ENCODE measurements at regions of chr13 and their contacts with region 1.

Region 1: DNA sequence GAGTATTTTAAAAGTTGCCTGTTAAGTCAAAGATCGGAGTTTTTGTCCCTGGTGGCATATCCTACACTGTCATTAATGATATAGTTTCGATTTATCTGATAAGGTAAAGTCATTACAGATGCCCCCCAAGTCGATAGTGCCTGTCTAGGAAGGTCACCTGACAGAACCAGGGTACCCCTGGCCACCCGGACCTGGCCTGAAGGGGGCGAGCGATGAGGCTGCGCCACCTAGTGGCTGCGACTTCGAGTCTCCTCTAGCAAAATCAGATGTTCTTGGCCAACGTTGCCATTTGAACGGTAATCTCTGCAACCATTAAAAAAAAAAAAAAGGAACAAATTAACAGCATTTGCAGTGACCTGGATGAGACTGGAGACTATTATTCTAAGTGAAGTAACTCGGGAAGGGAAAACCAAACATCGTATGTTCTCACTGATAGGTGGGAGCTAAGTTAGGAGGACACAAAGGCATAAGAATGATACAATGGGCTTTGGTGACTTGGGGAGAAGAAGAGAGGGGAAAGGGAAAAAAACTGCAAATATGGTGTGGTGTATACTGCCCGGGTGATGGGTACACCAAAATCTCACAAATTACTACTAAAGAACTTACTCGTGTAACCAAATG is 565.1 kb downstream of the LIG4 start:
- DNase-seq: peak; percentile 26
- CTCF ChIP-seq: peak; percentile 85

Region 2: GRCh38 chr13:107203146-107203847 is 446.9 kb before region 1 on chr13:
- CTCF ChIA-PET with region 1: interaction called, 16 read pairs
- POLR2A ChIA-PET with region 1: no interaction called
- DNase-seq: peak; percentile 21
- CTCF ChIP-seq: peak; percentile 5

Region 3: DNA sequence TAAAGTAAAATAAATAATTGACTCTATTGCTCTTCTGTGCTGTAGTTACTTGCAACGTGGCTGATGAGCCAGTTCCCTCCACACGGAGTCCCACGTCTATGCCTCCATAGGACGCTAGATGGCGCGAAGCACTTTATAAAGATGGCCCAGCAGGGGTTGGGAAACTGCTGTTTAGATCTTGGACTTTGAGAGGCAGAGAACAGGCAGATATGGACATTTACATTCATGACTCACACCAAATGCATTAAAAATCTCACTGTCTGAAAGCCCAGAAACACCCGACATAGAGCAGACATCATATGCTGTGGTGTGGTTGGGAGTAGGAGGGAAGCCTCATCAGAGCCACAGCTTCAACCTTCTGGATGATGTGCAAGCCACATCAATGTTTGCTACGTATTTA is 439.1 kb before region 1 on chr13:
- CTCF ChIA-PET with region 1: interaction called, 36 read pairs
- POLR2A ChIA-PET with region 1: no interaction called
- DNase-seq: peak; percentile 52
- CTCF ChIP-seq: peak; percentile 95

Region 4: DNA sequence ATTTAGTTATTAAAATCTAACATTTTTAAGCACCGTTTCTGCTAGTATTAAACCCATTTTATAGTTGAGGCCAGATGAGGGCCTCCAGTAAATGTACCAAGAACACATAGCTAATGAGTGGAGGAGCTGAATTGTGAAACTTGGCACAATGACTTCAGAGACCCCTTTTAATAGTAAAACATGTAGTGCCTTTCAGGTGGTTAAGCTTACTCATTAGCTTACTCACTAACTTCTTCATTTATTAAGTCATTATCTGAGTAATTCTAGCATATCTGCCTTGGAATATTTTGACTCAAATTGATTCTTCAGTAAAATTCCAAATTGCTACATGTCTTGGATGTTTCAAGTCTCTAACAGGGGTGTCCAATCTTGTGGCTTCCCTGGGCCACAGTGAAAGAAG is 170.1 kb before region 1 on chr13:
- CTCF ChIA-PET with region 1: no interaction called
- POLR2A ChIA-PET with region 1: no interaction called
- DNase-seq: no peak
- CTCF ChIP-seq: no peak

Measured in GM10248 (cell line).